Right lobe of liver (tissue), 6 donors: ENCODE measurements at regions of chr17 and their contacts with region 1.

Region 1: DNA sequence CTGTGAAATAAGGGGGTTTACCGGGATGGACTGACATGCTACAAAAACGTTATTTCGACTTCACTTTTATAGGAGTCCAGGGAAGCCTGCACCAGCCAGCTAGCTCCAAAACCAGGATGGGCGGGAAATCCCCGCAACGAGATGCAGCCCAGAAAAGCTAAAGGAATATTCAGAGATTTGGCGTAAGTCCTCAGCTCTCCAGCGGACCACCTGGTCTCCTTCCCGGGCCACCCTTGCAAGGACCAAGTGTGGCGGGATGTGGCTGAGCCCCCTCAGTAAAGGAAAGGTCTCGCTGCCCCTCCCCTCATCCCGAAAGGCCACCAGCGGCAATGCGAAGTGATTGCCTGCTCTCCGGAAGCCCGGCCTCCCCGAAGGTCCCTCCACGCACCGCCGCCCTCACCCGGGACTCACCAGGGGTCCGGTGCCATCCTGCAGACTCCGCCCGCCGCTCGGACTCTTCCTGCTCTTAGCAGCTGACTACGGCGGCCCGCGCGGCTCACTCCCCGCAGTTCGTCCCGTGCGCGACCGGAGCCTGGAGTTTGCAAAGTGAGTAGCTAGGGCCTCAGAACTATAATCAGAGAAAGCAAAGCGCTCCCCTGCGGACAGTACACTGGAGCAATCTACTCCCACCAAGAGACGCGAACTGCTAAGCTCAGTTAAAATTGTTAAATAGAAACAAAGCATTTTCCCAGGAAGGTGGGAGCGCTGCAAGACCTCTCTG is at the start of gene STX8:
- DNase-seq: peak; percentile 95 to 96 (median 95)
- ATAC-seq: peak; percentile 94 to 97 (median 96)
- H3K4me3 ChIP-seq: peak within 1 kb of the TSS; percentile 75 to 93 (median 82)
- H3K27ac ChIP-seq: peak within 1 kb of the TSS in 1 of 3 donors; percentile 27
- H3K4me1 ChIP-seq: peaks cover 0 to 17% (median 5%) of the 10 kb centered on the region in 4 donors
- H3K27me3 ChIP-seq: no peaks in the 10 kb centered on the region
- CTCF ChIP-seq: peak in 1 of 4 donors; percentile 7
- POLR2A ChIP-seq: peak; percentile 53
- total RNA-seq, gene STX8: 20.6 to 35.3 (median 27.7) TPM

Region 2: GRCh38 chr17:9371019-9371418 is 204.5 kb before region 1 on chr17:
- intact Hi-C with region 1: no loop called
- DNase-seq: no peak
- ATAC-seq: no peak
- H3K4me3 ChIP-seq: no peak overlapping the region
- H3K27ac ChIP-seq: no peak overlapping the region
- H3K4me1 ChIP-seq: no peaks in the 10 kb centered on the region
- H3K27me3 ChIP-seq: no peaks in the 10 kb centered on the region
- CTCF ChIP-seq: no peak
- POLR2A ChIP-seq: no peak

Region 3: DNA sequence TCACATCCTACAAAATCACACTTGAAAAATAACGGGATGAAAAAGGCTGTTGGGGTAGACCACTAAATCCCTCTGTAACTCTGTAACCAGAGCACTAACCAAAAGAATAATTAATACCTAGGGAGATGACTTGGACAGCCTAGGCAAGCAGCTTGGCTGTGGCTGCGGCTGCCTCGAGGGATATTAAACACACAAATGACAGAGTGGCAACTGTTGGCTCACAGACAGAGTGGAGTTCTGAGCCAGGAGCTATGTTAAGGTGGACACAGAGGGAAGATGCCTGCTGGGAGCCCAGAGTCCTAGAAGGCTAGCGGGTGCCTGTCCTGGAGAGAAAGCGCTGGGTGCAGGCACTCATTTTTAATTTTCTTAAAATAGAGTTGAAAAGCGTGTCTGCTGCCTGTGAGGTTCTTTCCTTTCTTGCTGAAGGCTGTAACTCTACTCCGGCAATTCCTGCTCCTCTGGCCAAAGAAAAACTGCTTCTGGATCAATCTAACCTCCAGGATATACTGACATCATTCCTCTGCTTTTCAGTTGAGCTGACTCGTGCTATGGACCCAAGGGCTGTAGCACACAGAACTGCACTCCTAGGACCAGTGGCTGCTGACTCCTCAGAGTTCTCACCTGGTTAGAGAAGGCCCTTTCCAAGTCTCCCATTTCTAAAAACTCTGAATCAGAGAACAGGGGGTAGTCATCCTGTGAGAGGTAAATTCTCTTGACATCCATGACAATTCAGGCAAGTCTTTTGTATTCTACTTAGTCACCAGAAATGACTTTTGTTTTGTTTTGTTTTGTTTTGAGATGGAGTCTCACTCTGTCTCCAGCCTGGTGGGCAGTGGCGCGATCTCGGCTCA is 147.9 kb before region 1 on chr17:
- intact Hi-C with region 1: no loop called
- DNase-seq: no peak
- ATAC-seq: no peak
- H3K4me3 ChIP-seq: no peak overlapping the region
- H3K27ac ChIP-seq: no peak overlapping the region
- H3K4me1 ChIP-seq: no peaks in the 10 kb centered on the region
- H3K27me3 ChIP-seq: no peaks in the 10 kb centered on the region
- CTCF ChIP-seq: no peak
- POLR2A ChIP-seq: no peak

Region 4: DNA sequence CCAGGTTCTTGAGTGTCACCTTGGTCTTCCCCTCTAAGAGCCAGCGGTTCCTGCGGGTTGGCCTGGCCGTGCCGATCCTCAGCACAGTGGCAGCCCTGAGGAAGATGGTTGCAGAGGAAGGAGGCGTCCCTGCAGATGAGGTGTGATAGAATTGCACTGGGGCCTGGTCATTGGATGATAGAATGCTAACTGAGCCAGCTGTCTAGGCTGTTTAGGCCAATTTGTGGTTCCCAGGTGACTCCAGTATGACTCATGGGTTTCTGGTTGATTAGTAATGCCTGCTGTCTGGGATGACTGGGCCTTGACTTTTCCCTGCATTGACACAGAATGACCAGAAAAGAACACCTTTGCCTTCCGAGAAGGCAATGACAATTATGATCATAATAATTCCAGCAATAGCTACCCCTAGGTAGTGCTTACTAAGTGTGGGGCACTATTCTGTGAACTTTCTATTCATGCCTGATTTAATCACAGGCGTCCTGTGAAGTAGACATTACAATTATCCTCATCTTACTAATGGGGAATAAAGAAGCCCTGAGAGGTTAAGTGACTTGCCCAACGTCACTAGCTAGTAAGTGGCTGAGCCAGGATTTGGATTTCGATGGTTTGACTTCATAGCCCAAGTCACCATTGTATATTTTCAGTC is 101.3 kb after region 1 on chr17:
- intact Hi-C with region 1: loop called in 1 of 2 experiments (anchors 10 kb)
- DNase-seq: no peak
- ATAC-seq: peak in 1 of 4 donors; percentile 78
- H3K4me3 ChIP-seq: no peak overlapping the region
- H3K27ac ChIP-seq: no peak overlapping the region
- H3K4me1 ChIP-seq: no peaks in the 10 kb centered on the region
- H3K27me3 ChIP-seq: no peaks in the 10 kb centered on the region
- CTCF ChIP-seq: no peak
- POLR2A ChIP-seq: no peak